Panc1 (cell line): ENCODE measurements at regions of chr2 and their contacts with region 1.

Region 1: GRCh38 chr2:216683846-216684507 is 11.4 kb downstream of the IGFBP5 start:
- DNase-seq: no peak
- ATAC-seq: no peak
- H3K4me3 ChIP-seq: no peak overlapping the region
- H3K27ac ChIP-seq: no peak overlapping the region
- H3K4me1 ChIP-seq: no peaks in the 10 kb centered on the region; the same call in 1 of the 2 replicates
- H3K27me3 ChIP-seq: no peaks in the 10 kb centered on the region
- CTCF ChIP-seq: no peak

Region 2: DNA sequence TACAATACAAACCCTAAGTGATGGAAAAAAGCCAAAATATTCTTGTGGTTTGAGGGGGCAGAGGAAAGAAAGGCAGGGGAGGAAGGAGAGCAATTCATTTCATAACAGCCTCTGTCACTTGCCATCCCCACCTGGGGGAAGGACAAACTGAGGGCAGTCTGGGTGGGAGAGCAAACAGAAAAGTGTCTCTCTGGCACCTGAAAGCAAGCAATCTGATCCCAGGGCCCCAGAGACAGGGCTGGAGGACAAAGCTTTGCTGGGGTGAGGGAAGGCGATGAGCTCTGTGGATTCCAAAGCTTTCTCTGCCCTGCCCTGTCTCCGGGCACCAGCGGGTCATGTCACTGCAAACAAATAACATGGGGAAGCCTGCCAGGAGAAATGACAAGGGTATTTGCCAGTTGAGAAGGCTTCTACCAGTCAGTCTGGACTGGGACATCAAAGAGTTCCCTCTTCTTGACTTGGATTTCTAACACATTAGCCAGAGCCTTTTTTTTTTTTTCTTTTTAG is 704.0 kb after region 1 on chr2:
- CTCF ChIA-PET with region 1: no interaction called
- POLR2A ChIA-PET with region 1: no interaction called
- in situ Hi-C with region 1: no loop called
- intact Hi-C with region 1: no loop called
- DNase-seq: no peak
- ATAC-seq: no peak
- H3K4me3 ChIP-seq: no peak overlapping the region
- H3K27ac ChIP-seq: no peak overlapping the region
- H3K4me1 ChIP-seq: no peaks in the 10 kb centered on the region
- H3K27me3 ChIP-seq: no peaks in the 10 kb centered on the region
- CTCF ChIP-seq: no peak

Region 3: DNA sequence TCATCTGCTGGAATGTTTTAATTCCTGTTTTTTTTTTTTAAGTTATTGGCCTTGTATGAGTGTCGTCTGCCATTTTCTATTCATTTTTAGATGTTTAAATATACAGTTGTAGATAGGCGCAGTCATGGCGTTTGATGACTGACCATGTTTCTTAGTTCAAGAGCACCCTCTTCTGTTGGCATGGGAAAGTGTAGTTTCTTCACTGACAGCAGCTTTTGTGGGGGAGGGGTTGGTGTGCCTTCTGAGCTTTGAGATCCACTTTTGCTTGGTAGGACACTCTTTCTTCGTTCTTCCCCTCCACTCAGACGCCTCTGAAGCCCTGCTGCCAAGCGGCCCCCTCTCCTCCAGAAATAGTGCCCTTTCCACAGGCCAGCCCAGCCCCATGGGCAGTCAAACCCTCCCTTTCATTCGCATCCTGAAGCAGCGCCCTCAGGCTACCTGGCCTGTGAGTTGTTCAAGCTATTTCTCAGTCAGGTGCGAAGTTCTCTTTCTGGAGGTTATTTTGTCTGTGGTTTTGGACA is 826.9 kb after region 1 on chr2:
- CTCF ChIA-PET with region 1: no interaction called
- POLR2A ChIA-PET with region 1: no interaction called
- in situ Hi-C with region 1: no loop called
- intact Hi-C with region 1: loop called (anchors 5 kb)
- DNase-seq: peak; percentile 17
- ATAC-seq: peak; percentile 73
- H3K4me3 ChIP-seq: no peak overlapping the region
- H3K27ac ChIP-seq: no peak overlapping the region
- H3K4me1 ChIP-seq: no peaks in the 10 kb centered on the region; the same call in 1 of the 2 replicates
- H3K27me3 ChIP-seq: no peaks in the 10 kb centered on the region
- CTCF ChIP-seq: peak; percentile 71

Region 4: GRCh38 chr2:217713395-217714286 is 1029.7 kb after region 1 on chr2:
- CTCF ChIA-PET with region 1: no interaction called
- POLR2A ChIA-PET with region 1: no interaction called
- in situ Hi-C with region 1: no loop called
- intact Hi-C with region 1: loop called (anchors 1 kb)
- DNase-seq: peak; percentile 54
- ATAC-seq: peak; percentile 86
- H3K4me3 ChIP-seq: no peak overlapping the region
- H3K27ac ChIP-seq: no peak overlapping the region
- H3K4me1 ChIP-seq: no peaks in the 10 kb centered on the region
- H3K27me3 ChIP-seq: peaks cover 3% of the 10 kb centered on the region; the same call in 1 of the 2 replicates
- CTCF ChIP-seq: peak; percentile 97